Cardiac septum (tissue), 1 donor: ENCODE measurements at regions of chr1 and their contacts with region 1.

Region 1: GRCh38 chr1:32716312-32717148 is 14.0 kb upstream of the SYNC start:
- DNase-seq: no peak

Region 2: DNA sequence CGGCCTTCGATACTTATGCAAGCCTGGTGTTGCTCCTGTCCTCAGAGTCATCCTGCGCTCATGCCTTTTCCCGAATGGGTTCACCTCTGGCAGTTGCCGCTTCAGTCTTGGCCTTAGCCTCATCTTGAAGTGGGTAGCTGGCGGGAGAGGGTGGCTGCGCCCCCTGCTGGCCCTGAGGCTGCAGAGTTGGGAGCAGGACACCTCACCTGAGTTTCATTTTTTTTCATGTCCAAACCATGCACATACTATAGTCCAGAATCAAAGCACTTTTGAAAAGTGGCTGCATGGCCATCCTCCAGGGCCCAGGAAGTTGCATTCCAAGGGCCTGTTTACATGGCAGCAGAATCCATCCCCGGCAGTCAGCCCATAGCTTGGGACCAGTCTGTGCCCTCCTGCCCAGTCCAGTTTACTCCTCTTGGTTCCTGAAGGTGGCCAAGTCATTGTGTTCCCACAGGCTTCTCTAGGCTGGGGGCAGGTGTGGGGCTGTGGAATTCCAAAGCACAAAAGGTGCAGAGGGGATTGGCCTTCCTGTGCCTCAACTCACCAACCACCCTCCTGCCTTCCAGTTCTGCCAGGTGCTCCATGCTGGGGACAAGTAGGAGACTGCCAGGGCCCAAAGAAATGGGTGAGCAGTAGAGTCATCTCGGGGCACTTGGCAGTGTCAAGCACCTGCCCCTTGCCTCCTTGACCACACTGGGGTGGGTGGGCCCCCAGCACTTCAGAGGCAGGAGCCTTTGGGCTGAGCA is 56.7 kb after region 1 on chr1:
- intact Hi-C with region 1: loop called (anchors 1 kb)
- DNase-seq: peak; percentile 86

Region 3: GRCh38 chr1:32870615-32871363 is 154.3 kb after region 1 on chr1 and contains the start of gene FNDC5:
- intact Hi-C with region 1: loop called (anchors 5 kb)
- DNase-seq: no peak
- total RNA-seq, gene FNDC5: 18.7 TPM

Region 4: DNA sequence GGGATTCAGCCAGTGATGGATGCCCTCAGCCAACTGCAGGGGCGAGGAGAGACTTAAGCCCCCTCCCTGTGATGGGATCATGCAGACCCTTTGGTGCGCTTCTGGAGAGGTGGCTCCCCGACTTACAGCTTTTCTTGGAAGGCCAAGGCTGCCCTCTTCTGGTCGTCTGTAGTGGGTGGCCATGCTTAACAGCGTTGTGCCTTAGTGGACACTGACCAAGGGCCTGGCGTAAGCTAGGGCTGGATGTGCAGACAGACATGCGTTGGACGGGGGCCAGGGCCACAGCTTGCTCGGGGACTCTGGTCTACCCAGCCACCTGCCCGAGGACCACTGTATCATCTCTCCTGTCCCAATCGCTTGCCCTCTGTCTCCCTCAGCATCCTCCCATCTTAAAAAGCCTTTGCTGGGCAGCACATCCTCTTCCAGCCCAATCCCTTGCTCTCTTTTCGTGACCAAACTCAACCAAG is 369.9 kb after region 1 on chr1:
- intact Hi-C with region 1: loop called (anchors 5 kb)
- DNase-seq: peak; percentile 82